Panc1 (cell line): ENCODE measurements at regions of chr13 and their contacts with region 1.

Region 1: GRCh38 chr13:64371045-64371444 is 2859.1 kb downstream of the PCDH9 start:
- DNase-seq: no peak
- ATAC-seq: no peak
- H3K4me3 ChIP-seq: no peak overlapping the region
- H3K27ac ChIP-seq: no peak overlapping the region
- H3K4me1 ChIP-seq: no peaks in the 10 kb centered on the region
- H3K27me3 ChIP-seq: no peaks in the 10 kb centered on the region
- CTCF ChIP-seq: no peak

Region 2: DNA sequence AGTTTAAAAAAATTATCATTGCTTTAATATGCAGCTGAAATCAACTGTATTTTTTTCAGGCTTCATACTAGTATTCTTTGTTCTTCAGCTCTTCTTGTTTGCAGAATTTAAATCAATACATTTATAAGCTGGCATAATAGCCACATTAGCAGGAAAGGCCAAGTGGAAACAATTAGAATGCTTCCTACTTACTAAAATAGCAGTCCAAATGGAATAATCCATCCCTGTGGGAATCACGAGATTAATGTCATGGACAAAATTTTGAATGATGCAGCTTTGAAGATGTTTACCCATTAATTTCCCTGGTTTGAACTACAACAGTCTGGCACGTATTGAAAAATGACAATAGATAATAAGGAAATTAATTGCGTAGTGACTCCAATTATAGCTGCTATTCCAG is 208.3 kb after region 1 on chr13:
- CTCF ChIA-PET with region 1: no interaction called
- POLR2A ChIA-PET with region 1: no interaction called
- in situ Hi-C with region 1: no loop called
- intact Hi-C with region 1: no loop called
- DNase-seq: no peak
- ATAC-seq: no peak
- H3K4me3 ChIP-seq: no peak overlapping the region
- H3K27ac ChIP-seq: no peak overlapping the region
- H3K4me1 ChIP-seq: no peaks in the 10 kb centered on the region
- H3K27me3 ChIP-seq: no peaks in the 10 kb centered on the region
- CTCF ChIP-seq: no peak

Region 3: GRCh38 chr13:66359910-66360552 is 1989.0 kb after region 1 on chr13:
- CTCF ChIA-PET with region 1: no interaction called
- POLR2A ChIA-PET with region 1: no interaction called
- in situ Hi-C with region 1: no loop called
- intact Hi-C with region 1: loop called (anchors 10 kb)
- DNase-seq: no peak
- ATAC-seq: no peak
- H3K4me3 ChIP-seq: 0 out of 4 replicates have a peak overlapping the region, but pooled peaks of 1 of the 2 experiments have one; percentile 6
- H3K27ac ChIP-seq: no peak overlapping the region; the same call in 1 of the 2 replicates
- H3K4me1 ChIP-seq: no peaks in the 10 kb centered on the region
- H3K27me3 ChIP-seq: no peaks in the 10 kb centered on the region
- CTCF ChIP-seq: no peak